ENCODE measurements at regions of chr17 and their contacts with region 1.

Region 1: GRCh38 chr17:10844621-10845387 is 6.9 kb upstream of the PIRT start:
- DNase-seq: peak; percentile 88 to 91 (median 89)
- ATAC-seq: peak; percentile 97
- H3K4me3 ChIP-seq: no peak overlapping the region
- H3K4me1 ChIP-seq: peaks cover 3% of the 10 kb centered on the region
- CTCF ChIP-seq: peak; percentile 85

Region 2: GRCh38 chr17:10646392-10646990 is 198.3 kb before region 1 on chr17:
- intact Hi-C with region 1: loop called in 1 of 2 experiments (anchors 5 kb)
- DNase-seq: peak in 2 of 3 donors; percentile 71 to 76
- ATAC-seq: peak; percentile 84
- H3K4me3 ChIP-seq: no peak overlapping the region
- H3K4me1 ChIP-seq: no peaks in the 10 kb centered on the region
- CTCF ChIP-seq: peak; percentile 80

Region 3: DNA sequence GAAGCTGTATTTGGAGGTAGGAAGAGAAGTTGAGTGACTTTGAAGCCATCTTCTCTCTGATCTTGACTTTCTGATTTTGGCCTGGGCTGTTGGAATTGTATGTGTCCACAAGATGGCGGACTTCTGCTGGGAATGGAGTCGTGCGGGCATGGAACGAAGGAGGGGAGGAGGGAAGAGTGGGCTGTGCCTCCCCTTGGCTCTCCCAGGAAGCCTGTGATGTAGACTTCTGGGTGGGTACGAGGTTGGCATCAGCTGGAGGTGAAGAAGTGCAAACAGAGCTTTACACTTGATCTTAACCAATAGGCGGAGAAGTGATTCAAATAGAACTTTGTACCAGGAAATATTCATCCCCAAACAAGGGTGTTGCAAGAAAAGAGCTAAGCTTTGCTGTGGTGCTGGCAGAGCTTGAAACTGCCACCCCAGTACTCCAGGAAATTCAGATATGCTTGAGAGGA is 107.6 kb before region 1 on chr17:
- intact Hi-C with region 1: loop called (anchors 5 to 10 kb)
- DNase-seq: peak; percentile 82 to 88 (median 84)
- ATAC-seq: peak; percentile 94
- H3K4me3 ChIP-seq: no peak overlapping the region
- H3K4me1 ChIP-seq: peaks cover 19% of the 10 kb centered on the region
- CTCF ChIP-seq: peak; percentile 60

Region 4: GRCh38 chr17:10743316-10744009 is 101.3 kb before region 1 on chr17:
- intact Hi-C with region 1: loop called (anchors 5 to 10 kb)
- DNase-seq: no peak
- ATAC-seq: peak; percentile 10
- H3K4me3 ChIP-seq: no peak overlapping the region
- H3K4me1 ChIP-seq: peaks cover 11% of the 10 kb centered on the region
- CTCF ChIP-seq: no peak

Region 5: GRCh38 chr17:10798332-10798749 is 46.5 kb before region 1 on chr17:
- intact Hi-C with region 1: loop called in 1 of 2 experiments (anchors 5 kb)
- DNase-seq: peak in 1 of 3 donors; percentile 56
- ATAC-seq: peak; percentile 36
- H3K4me3 ChIP-seq: no peak overlapping the region
- H3K4me1 ChIP-seq: peaks cover 24% of the 10 kb centered on the region
- CTCF ChIP-seq: no peak